ENCODE measurements at regions of chr1 and their contacts with region 1.

Region 1: GRCh38 chr1:44089371-44090049 is 29.1 kb upstream of the KLF17 start:
- DNase-seq: no peak
- H3K4me3 Mint-ChIP-seq: no peak overlapping the region
- H3K27ac Mint-ChIP-seq: no peak overlapping the region
- H3K4me1 Mint-ChIP-seq: peaks cover 24% of the 10 kb centered on the region
- H3K27me3 Mint-ChIP-seq: peaks cover 21% of the 10 kb centered on the region
- CTCF ChIP-seq: no peak

Region 2: DNA sequence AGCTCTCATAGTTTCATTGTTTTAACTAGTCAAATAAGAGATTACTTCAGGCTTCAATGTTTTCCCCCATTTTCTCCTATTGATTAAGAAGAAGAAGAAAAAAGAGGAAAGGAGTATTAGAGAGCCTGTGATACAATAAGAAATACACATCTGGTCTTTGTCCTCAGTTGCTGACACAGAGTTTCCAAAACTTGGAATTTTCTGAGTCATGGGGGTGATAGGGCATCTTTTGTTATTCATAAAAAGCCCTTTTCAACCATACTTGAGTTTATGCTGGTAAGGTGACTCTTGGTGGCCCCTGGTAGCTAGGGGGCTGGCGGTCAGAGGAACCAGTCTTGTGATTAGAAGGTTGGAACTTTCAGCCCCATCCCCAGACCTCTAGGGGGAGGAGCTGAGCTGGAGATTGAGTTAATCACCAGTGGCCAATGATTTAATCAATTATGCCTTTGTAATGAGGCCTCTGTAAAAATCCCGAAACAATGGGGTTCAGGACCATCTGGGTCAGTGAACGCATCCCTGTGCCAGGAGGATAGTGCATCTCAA is 80.8 kb after region 1 on chr1:
- CTCF ChIA-PET with region 1: no interaction called
- intact Hi-C with region 1: loop called (anchors 10 kb)
- DNase-seq: no peak
- H3K4me3 Mint-ChIP-seq: no peak overlapping the region
- H3K27ac Mint-ChIP-seq: no peak overlapping the region
- H3K4me1 Mint-ChIP-seq: no peaks in the 10 kb centered on the region
- H3K27me3 Mint-ChIP-seq: no peaks in the 10 kb centered on the region
- CTCF ChIP-seq: peak; percentile 27

Measured in Calu3 (cell line).